ENCODE measurements at regions of chr2 and their contacts with region 1.

Region 1: DNA sequence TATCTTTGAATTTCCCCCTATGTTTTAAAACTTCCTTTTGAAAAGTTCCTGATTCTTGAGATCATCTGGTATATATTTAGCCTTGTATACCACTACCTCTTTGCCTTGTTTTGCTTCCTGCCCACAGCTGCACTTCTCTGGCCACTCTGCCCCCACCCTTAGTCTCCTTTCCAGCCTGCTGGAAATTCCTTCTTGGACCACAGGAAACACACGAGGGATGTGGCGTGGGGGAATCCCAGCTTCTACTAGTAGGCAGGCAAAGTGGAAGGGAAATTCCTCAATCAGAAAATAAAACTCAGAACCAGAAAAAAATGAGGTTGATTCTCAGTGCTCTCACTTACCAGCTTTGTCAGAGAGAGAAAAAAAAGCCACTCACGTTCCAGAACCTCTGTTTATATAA is 13.4 kb downstream of the IL18RAP start:
- DNase-seq: no peak
- H3K4me3 Mint-ChIP-seq: peak overlapping the region; percentile 53
- H3K27ac Mint-ChIP-seq: peak overlapping the region; percentile 86
- H3K4me1 Mint-ChIP-seq: peaks cover 33% of the 10 kb centered on the region
- H3K27me3 Mint-ChIP-seq: no peaks in the 10 kb centered on the region

Region 2: GRCh38 chr2:102063941-102064678 is 372.2 kb before region 1 on chr2:
- intact Hi-C with region 1: loop called (anchors 1 kb)
- DNase-seq: peak; percentile 17
- H3K4me3 Mint-ChIP-seq: no peak overlapping the region
- H3K27ac Mint-ChIP-seq: no peak overlapping the region
- H3K4me1 Mint-ChIP-seq: peaks cover 31% of the 10 kb centered on the region
- H3K27me3 Mint-ChIP-seq: peaks cover 7% of the 10 kb centered on the region

Region 3: DNA sequence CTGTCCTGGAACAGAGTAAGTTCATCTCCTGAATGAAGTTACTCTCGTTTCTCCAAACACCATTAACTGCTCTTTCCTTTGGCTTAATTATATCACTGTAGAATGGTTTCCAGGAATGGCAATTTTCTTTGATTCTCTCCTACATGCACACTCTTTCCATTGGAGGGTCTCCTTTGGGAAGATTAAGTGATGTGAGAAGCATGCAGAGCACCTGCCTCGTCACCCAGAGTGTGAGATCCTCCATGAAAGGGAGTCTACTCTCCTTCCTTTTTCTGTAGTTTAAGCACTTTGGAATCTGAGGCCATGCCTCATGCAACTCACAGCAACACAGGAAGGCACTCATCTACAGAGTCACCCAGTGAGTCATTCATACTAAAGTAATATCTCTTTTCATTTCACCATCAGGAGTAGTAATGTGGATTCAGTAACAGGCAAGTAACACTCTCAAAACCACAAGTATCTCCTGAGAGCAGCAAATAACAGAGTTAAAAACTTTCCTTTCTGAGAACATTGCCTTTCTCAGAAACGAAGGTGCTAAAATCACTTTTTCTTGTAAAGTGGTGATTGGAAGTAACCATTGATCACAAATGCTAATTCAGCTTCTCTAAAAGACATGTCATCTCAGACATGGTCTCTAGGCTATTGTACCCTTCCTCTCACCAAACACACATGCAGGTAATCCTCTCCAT is 177.8 kb before region 1 on chr2:
- intact Hi-C with region 1: loop called (anchors 1 kb)
- DNase-seq: peak; percentile 36
- H3K4me3 Mint-ChIP-seq: peak overlapping the region; percentile 81
- H3K27ac Mint-ChIP-seq: peak overlapping the region; percentile 100
- H3K4me1 Mint-ChIP-seq: peaks cover 52% of the 10 kb centered on the region
- H3K27me3 Mint-ChIP-seq: no peaks in the 10 kb centered on the region

Region 4: DNA sequence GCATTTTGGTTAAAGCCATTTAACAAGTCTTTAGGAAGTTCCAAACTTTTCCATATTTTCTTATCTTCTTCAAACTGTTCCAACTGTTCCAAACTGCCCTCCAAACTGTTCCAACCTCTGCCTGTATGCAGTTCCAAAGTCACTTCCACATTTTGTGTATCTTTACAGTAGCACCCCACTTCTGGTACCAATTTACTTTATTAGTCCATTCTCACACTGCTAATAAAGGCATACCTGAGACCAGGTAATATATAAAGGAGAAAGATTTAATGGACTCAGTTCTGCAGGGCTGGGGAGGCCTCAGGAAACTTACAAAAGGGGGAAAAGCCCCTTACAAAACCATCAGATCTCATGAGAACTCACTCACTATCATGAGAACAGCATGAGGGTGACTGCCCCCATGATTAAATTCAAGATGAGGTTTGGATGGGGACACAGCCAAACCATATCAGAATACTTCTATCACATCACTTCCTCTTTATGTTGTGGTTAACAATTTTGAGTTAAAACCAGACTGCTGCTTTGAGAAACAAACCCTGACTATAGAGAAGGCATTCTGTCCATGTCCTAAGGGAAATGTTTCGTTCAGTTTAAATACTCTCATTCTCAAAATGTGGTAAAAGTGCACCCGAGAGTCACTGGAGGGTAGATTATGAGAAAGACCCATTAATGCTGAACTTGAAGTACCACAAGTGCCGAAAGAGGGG is 69.8 kb before region 1 on chr2:
- intact Hi-C with region 1: loop called (anchors 1 kb)
- DNase-seq: no peak
- H3K4me3 Mint-ChIP-seq: peak overlapping the region; percentile 79
- H3K27ac Mint-ChIP-seq: peak overlapping the region; percentile 97
- H3K4me1 Mint-ChIP-seq: peaks cover 97% of the 10 kb centered on the region
- H3K27me3 Mint-ChIP-seq: no peaks in the 10 kb centered on the region

Region 5: GRCh38 chr2:102418421-102418961 is 17.8 kb before region 1 on chr2:
- intact Hi-C with region 1: loop called (anchors 1 kb)
- DNase-seq: peak; percentile 34
- H3K4me3 Mint-ChIP-seq: peak overlapping the region; percentile 90
- H3K27ac Mint-ChIP-seq: peak overlapping the region; percentile 94
- H3K4me1 Mint-ChIP-seq: peaks cover 68% of the 10 kb centered on the region
- H3K27me3 Mint-ChIP-seq: no peaks in the 10 kb centered on the region

Measured in activated T-helper 1 cell treated with anti-CD3 and anti-CD28 coated beads, Interleukin-12 subunit alpha, Interleukin-12 subunit beta, Interleukin-2, Interleukin-4 antibody, amounts not matched to agents 30 ng/mL and 10 ng/mL and 1 ng/mL, durations not matched to agents 14 hours and 24 hours and 36 hours (primary cell).